ENCODE measurements at regions of chrX and their contacts with region 1.

Region 1: GRCh38 chrX:48917139-48918001 is 1.5 kb downstream of the PIM2 start:
- DNase-seq: peak; percentile 70 to 95 (median 89)
- ATAC-seq: peak; percentile 30 to 34
- H3K4me3 Mint-ChIP-seq: peak overlapping the region; percentile 95 to 99 (median 98)
- H3K27ac Mint-ChIP-seq: peak overlapping the region; percentile 87 to 99 (median 97)
- H3K4me1 Mint-ChIP-seq: peaks cover 14 to 69% (median 49%) of the 10 kb centered on the region in 4 donors
- H3K27me3 Mint-ChIP-seq: peaks cover 0 to 2% (median 0%) of the 10 kb centered on the region in 5 donors

Region 2: DNA sequence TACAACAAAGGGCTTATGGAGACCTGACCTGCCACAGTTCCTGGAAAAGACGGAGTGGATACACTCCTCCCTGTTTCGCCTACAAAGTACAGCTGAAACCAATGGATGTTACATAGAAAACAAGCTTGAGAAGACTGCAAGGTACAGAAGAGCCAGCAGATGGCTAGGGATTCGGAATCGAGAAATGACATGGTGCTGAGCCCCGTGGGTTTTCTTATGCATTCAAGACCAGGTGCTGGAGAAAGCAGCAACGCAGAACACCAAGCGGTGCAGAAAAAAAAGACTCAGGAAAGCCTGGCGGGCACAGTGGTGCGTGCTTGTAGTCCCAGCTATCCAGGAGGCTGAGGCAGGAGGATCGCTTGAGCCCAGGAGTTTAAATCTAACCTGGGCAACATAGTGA is 33.6 kb before region 1 on chrX:
- POLR2A ChIA-PET with region 1: no interaction called
- DNase-seq: no peak
- ATAC-seq: no peak
- H3K4me3 Mint-ChIP-seq: no peak overlapping the region
- H3K27ac Mint-ChIP-seq: peak overlapping the region in 2 of 10 donors; percentile 34 to 43
- H3K4me1 Mint-ChIP-seq: no peaks in the 10 kb centered on the region
- H3K27me3 Mint-ChIP-seq: no peaks in the 10 kb centered on the region

Region 3: GRCh38 chrX:48937054-48937907 is 19.9 kb after region 1 on chrX:
- POLR2A ChIA-PET with region 1: interaction called, 276 read pairs
- DNase-seq: peak; percentile 65 to 97 (median 92)
- ATAC-seq: peak; percentile 72 to 73
- H3K4me3 Mint-ChIP-seq: peak overlapping the region; percentile 78 to 92 (median 87)
- H3K27ac Mint-ChIP-seq: peak overlapping the region; percentile 96 to 99 (median 99)
- H3K4me1 Mint-ChIP-seq: peaks cover 35 to 87% (median 81%) of the 10 kb centered on the region in 4 donors
- H3K27me3 Mint-ChIP-seq: no peaks in the 10 kb centered on the region

Region 4: GRCh38 chrX:48945516-48946348 is 28.4 kb after region 1 on chrX:
- POLR2A ChIA-PET with region 1: interaction called, 276 read pairs
- DNase-seq: peak; percentile 26 to 76 (median 50)
- ATAC-seq: peak; percentile 65 to 74
- H3K4me3 Mint-ChIP-seq: peak overlapping the region; percentile 18 to 59 (median 40)
- H3K27ac Mint-ChIP-seq: peak overlapping the region; percentile 69 to 92 (median 78)
- H3K4me1 Mint-ChIP-seq: peaks cover 16 to 56% (median 51%) of the 10 kb centered on the region in 4 donors
- H3K27me3 Mint-ChIP-seq: no peaks in the 10 kb centered on the region

Region 5: DNA sequence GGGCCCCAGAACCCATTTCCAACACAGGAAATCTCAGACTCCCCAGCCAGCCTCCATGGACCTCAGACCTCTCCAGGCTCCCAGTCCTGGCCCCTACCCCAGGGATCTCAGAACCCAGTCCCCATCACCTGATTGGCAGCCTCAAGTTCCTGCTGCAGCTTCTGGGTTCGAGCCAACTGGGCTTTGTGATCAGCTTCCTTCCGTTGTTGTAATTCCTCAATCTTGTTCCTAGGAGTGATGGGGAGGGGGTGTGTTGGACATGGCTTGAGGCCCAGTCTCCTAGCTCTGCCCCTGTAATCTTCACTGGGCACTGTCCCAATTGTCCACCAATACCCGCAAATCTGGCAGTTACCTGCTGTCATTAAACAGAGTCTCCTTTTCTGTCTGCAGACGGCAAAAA is 72.1 kb after region 1 on chrX:
- POLR2A ChIA-PET with region 1: no interaction called
- DNase-seq: no peak
- ATAC-seq: no peak
- H3K4me3 Mint-ChIP-seq: no peak overlapping the region
- H3K27ac Mint-ChIP-seq: no peak overlapping the region
- H3K4me1 Mint-ChIP-seq: peaks cover 0 to 6% (median 0%) of the 10 kb centered on the region in 4 donors
- H3K27me3 Mint-ChIP-seq: no peaks in the 10 kb centered on the region